Ascending aorta (tissue), 2 donors: ENCODE measurements at regions of chr3 and their contacts with region 1.

Region 1: DNA sequence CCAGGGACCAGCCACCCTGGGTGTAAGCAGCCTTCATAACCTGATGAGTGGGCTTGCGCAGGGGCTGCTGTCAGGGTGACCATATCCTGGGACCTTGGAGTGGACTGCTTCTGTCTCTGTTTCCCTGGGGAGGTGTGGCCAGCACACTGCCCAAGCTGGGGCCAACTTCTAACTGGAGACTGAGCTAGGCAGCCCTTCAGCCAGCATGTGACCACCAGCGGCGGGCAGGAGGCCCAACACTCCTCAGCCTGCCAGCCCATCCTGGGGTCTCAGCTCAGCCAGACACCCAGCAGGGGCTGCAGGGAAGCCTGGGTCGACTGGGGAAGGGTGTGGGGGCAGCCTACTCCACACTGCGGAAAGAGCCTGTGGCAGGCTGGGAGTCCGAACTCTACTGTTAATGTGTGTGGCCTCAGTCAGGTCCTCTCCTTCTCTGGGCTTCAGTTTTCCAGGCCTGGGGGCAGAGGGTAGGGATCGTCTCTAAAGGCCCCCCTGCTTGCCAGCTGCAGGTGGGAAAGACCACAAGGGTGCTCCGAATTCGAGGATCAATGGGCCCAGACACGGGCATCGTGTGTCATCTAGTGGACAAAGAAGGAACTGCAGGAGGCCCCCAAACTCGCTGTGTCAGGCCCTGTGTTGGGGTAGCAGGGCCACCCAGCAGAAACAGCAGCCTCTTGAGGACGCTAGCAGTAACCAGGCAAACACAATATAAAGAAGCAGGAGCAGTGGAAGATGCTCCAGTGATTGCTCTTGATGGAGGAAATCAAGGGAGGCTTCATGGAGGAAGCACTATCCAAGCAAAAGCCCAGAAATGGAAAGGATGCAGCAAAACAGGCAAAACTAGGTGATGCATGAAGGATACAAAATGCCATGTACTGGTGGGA is 2.0 kb upstream of the SEMA3G start:
- DNase-seq: peak in 1 of 2 donors; percentile 83
- H3K4me3 ChIP-seq: no peak overlapping the region
- H3K27ac ChIP-seq: no peak overlapping the region
- H3K4me1 ChIP-seq: peaks cover 0 to 6% of the 10 kb centered on the region in 2 donors
- H3K27me3 ChIP-seq: no peaks in the 10 kb centered on the region
- CTCF ChIP-seq: peak; percentile 96 to 100 (median 100)

Region 2: DNA sequence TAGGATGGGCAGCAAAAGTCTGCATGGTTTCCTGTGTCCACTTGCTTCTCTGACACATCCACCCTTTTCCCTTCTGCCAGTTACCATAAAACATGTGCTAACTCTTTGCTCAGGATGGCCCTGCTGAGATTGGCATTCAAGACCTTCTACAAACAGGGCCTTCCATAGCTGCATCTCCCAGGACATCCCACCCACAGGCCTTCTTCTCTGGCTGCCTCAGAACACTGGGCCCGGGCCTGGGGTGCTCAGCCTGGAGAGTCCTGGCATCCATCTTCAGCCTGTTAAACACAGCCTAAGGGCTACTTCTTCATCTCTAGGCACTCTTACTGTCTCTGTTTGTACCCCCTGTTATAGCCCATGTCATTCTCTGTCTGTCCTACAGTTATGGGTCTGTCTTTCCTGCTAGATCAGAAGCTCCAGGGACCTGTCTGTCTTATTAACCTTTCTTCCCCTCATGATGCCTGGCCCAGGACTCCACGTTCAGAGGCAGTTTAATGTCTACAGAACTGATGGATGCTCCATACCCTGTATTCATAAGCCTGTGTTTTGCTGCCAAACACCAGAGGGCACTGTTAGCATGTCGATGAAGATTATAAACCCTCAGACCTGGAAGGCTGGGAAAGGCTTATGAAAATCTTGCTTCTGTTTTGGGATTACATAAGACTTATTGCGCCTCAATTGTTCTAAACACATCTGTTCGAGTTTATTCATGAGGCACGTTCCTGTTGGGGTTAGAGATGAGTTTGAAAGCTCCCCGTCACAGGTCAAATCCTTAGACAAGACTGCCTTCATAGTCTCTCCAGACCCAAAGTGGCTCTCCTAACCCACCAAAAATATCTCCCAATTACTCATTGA is 18.5 kb before region 1 on chr3:
- intact Hi-C with region 1: loop called (anchors 1 kb)
- DNase-seq: no peak
- H3K4me3 ChIP-seq: no peak overlapping the region
- H3K27ac ChIP-seq: no peak overlapping the region
- H3K4me1 ChIP-seq: no peaks in the 10 kb centered on the region
- H3K27me3 ChIP-seq: no peaks in the 10 kb centered on the region
- CTCF ChIP-seq: peak; percentile 54 to 71 (median 66)

Region 3: DNA sequence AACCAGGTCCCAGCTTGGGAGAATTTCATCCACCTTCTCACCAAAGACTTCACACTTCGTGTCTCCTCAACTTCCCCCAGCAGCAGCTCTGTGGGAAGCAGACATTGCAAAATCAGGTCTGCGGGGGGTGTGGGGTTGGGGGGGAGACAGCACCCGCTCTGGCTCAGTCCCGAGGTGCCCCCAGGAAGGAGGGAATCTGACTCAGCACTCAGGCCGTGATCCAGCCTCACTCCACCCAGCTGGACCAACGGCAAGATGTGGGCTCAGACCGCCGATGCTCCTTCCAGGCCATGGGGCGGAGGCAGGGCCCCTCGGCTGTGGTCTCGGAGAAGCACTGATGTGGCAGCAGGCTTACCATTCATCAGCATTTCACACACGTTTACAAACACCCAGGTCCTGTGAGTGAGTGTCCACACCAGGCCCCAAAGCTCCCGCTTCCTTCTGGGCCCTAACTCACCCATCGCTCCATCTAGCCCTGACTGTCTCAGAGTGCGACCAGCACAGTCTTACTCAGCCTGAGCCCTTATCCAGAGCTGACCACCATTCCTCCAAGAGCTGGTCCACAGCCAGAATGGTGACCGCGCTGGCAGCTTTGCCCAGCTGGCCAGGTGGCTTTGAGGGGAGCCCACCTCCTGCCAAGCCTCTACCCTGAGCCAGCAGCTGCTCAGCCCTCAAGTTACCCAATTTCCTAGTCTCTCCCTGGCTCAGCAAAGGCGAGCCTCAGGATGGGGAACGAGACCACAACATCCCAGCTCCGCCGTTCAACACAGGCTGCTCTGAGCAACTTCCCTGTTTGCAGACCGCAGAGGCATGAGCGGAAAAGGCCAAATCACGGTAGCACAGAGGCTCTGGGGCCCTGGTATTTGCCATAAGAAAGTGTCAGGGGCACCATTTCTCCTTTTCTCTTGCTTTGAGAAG is 51.5 kb after region 1 on chr3:
- intact Hi-C with region 1: no loop called
- DNase-seq: peak; percentile 38 to 81
- H3K4me3 ChIP-seq: no peak overlapping the region
- H3K27ac ChIP-seq: no peak overlapping the region
- H3K4me1 ChIP-seq: no peaks in the 10 kb centered on the region
- H3K27me3 ChIP-seq: no peaks in the 10 kb centered on the region
- CTCF ChIP-seq: no peak